MCF 10A (cell line): ENCODE measurements at regions of chr22 and their contacts with region 1.

Region 1: GRCh38 chr22:18077639-18078328 is at the start of gene PEX26:
- DNase-seq: peak; percentile 96
- H3K4me3 Mint-ChIP-seq: peak within 1 kb of the TSS; percentile 91
- H3K27ac Mint-ChIP-seq: peak within 1 kb of the TSS; percentile 80
- H3K4me1 Mint-ChIP-seq: peaks cover 34% of the 10 kb centered on the region
- H3K27me3 Mint-ChIP-seq: no peaks in the 10 kb centered on the region
- CTCF ChIP-seq: no peak
- total RNA-seq, gene PEX26: 41.0 and 47.1 TPM in 2 replicates

Region 2: GRCh38 chr22:17742527-17742902 is 335.3 kb before region 1 on chr22:
- CTCF ChIA-PET with region 1: interaction called, 21 read pairs
- POLR2A ChIA-PET with region 1: interaction called, 3 read pairs
- intact Hi-C with region 1: no loop called
- DNase-seq: peak; percentile 76
- H3K4me3 Mint-ChIP-seq: no peak overlapping the region
- H3K27ac Mint-ChIP-seq: no peak overlapping the region
- H3K4me1 Mint-ChIP-seq: no peaks in the 10 kb centered on the region
- H3K27me3 Mint-ChIP-seq: no peaks in the 10 kb centered on the region
- CTCF ChIP-seq: peak; percentile 82

Region 3: GRCh38 chr22:17795661-17796548 is 281.9 kb before region 1 on chr22:
- CTCF ChIA-PET with region 1: no interaction called
- POLR2A ChIA-PET with region 1: no interaction called
- intact Hi-C with region 1: no loop called
- DNase-seq: no peak
- H3K4me3 Mint-ChIP-seq: no peak overlapping the region
- H3K27ac Mint-ChIP-seq: no peak overlapping the region
- H3K4me1 Mint-ChIP-seq: no peaks in the 10 kb centered on the region
- H3K27me3 Mint-ChIP-seq: no peaks in the 10 kb centered on the region
- CTCF ChIP-seq: no peak

Region 4: DNA sequence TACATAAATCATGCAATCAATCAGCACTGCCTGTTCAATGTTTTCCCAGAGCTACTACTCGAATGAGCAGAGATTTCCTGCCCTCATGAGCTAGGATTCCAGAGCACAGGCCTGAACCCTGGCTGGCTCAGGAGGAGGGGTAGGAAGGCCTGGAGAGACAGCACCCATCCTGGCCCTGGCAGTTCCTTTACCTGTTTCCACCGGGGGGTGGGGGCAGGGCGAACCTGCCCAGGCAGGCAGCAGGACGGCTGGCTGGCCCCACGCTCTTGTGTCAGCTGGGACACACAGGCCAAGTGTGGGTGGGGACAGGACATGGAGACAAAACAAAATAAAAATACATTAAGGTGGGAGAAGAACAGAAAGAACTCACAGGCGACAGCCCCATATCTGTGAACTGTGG is 193.7 kb before region 1 on chr22:
- CTCF ChIA-PET with region 1: interaction called, 10 read pairs
- POLR2A ChIA-PET with region 1: no interaction called
- intact Hi-C with region 1: no loop called
- DNase-seq: peak; percentile 41
- H3K4me3 Mint-ChIP-seq: no peak overlapping the region
- H3K27ac Mint-ChIP-seq: peak overlapping the region; percentile 82
- H3K4me1 Mint-ChIP-seq: peaks cover 21% of the 10 kb centered on the region
- H3K27me3 Mint-ChIP-seq: no peaks in the 10 kb centered on the region
- CTCF ChIP-seq: no peak

Region 5: DNA sequence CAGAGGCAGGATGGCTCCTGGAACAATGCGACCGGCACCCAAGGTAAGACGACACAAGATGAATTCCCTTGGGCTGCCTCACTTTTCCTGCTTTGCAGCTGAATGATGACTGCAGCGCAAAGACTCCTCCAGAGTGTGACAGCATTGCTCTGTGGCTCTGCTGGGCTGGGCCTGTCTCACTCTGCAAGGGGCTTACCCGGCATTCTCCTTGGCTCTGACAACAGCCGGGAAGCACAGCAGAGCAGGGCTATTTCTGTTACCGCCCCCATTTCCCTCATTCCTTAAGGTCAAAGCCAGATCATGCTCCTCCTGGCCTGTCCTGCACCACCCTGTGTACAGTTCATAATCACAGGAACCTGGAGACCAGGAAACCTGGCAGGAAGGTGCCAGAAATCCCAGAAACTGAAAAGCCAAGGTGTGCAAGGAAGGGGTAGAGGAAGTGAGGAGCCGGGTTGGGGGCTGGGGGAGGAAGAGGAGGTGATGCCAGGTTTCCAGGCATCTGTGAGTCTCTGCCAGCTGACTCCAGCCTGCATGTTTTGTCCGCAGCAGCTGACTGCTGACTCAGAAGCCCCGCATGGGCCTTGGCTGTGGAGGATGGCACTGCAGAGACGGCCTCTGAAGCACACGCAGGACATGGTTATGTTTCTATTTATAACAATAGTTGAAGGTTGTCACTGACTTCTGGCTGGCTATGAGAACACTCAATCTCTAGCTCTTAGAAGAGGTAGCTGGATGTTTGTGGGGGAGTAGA is 167.0 kb before region 1 on chr22:
- CTCF ChIA-PET with region 1: interaction called, 18 read pairs
- POLR2A ChIA-PET with region 1: interaction called, 4 read pairs
- intact Hi-C with region 1: no loop called
- DNase-seq: peak; percentile 66
- H3K4me3 Mint-ChIP-seq: no peak overlapping the region
- H3K27ac Mint-ChIP-seq: peak overlapping the region; percentile 11
- H3K4me1 Mint-ChIP-seq: peaks cover 20% of the 10 kb centered on the region
- H3K27me3 Mint-ChIP-seq: no peaks in the 10 kb centered on the region
- CTCF ChIP-seq: no peak

Region 6: DNA sequence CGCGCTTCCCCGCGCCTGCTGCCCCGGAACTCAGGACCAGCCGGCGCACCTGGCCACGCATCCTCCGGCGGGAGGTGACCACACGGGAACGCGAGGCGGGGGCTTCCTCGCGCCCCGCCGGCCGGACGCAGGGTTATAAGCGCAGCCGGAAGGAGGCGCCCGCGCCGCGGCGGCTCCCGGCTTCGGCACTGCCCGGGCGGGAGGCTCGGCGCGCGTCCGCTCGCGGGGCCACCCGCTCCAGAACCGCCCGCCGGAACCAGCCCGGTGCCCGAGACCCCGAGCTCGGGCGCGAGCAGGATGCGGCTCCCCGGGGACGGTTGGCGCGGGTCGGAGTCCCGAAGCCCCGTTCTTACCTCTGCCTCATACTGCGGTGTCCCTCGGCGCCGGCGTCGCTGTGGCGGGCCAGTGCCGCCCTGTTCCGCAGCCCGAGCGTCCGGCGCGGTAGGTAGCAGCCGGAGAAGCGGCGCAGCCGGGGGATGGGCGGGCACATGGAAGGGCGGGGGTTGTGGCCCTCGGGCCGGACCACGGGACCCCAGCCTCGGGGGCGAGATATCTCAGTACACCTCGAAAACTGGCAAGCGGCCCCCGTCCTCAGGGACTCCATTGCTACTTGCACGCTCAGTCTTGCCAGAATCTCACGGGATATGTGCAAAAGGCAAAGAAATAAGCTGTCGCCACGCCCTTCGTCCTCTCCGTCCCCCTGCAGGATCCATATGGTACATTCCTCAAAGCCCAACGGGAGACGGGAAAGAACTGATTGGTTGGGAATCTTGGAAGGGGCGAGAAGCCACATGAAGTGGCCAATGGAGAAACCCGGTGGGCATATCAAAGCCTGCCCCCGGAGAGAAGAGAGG is 76.5 kb before region 1 on chr22:
- CTCF ChIA-PET with region 1: interaction called, 100 read pairs
- POLR2A ChIA-PET with region 1: interaction called, 55 read pairs
- intact Hi-C with region 1: loop called (anchors 1 kb)
- DNase-seq: peak; percentile 98
- H3K4me3 Mint-ChIP-seq: peak overlapping the region; percentile 92
- H3K27ac Mint-ChIP-seq: peak overlapping the region; percentile 99
- H3K4me1 Mint-ChIP-seq: peaks cover 31% of the 10 kb centered on the region
- H3K27me3 Mint-ChIP-seq: no peaks in the 10 kb centered on the region
- CTCF ChIP-seq: peak; percentile 48

Region 7: GRCh38 chr22:18024276-18024947 is 53.4 kb before region 1 on chr22 and contains the start of gene MICAL3:
- CTCF ChIA-PET with region 1: interaction called, 54 read pairs
- POLR2A ChIA-PET with region 1: interaction called, 66 read pairs
- intact Hi-C with region 1: loop called (anchors 1 kb)
- DNase-seq: peak; percentile 66
- H3K4me3 Mint-ChIP-seq: peak within 1 kb of the TSS; percentile 85
- H3K27ac Mint-ChIP-seq: peak within 1 kb of the TSS; percentile 17
- H3K4me1 Mint-ChIP-seq: peaks cover 21% of the 10 kb centered on the region
- H3K27me3 Mint-ChIP-seq: no peaks in the 10 kb centered on the region
- CTCF ChIP-seq: peak; percentile 53
- total RNA-seq, gene MICAL3: 54.1 and 62.1 TPM in 2 replicates

Region 8: DNA sequence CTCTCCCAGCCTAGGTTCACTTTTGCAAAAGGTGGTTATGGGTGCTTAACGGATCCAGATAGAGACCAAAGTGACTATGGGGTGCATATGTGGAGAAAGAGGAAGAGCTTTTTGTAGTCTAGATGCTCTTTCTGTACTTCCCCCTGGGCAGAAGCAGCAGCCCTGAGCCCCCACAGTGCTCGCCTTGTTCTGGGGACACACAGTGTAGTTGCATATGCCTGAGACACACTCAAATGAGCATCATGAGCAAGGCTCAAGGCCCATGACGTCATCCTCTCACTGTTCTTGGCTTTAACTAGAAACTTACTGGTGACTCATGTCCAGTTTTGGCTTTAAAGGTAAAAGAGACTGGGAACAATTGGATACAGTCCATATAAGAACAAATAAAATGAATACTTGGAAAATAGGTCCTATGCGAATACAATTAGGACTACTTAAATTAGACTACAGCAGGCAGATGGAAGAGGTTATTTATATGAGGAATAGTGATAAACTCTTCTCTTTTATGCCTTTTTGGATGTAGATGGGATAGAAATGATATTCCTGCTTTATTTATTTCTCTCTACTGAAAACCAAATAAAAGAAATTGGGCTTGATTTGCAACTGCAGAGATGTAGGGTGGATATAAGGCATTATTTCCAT is 20.1 kb before region 1 on chr22:
- CTCF ChIA-PET with region 1: interaction called, 67 read pairs
- POLR2A ChIA-PET with region 1: interaction called, 30 read pairs
- intact Hi-C with region 1: no loop called
- DNase-seq: peak; percentile 99
- H3K4me3 Mint-ChIP-seq: no peak overlapping the region
- H3K27ac Mint-ChIP-seq: peak overlapping the region; percentile 5
- H3K4me1 Mint-ChIP-seq: peaks cover 31% of the 10 kb centered on the region
- H3K27me3 Mint-ChIP-seq: no peaks in the 10 kb centered on the region
- CTCF ChIP-seq: no peak